ENCODE measurements at regions of chr5 and their contacts with region 1.

Region 1: GRCh38 chr5:95822542-95823181 is at the start of gene GLRX:
- DNase-seq: peak; percentile 66 to 95
- H3K4me3 ChIP-seq: peak within 1 kb of the TSS; percentile 79
- H3K27ac ChIP-seq: peak within 1 kb of the TSS; percentile 98
- H3K4me1 ChIP-seq: peaks cover 32% of the 10 kb centered on the region
- H3K27me3 ChIP-seq: no peaks in the 10 kb centered on the region
- CTCF ChIP-seq: no peak
- total RNA-seq, gene GLRX: 23.0 and 25.5 TPM in 2 replicates

Region 2: GRCh38 chr5:95760273-95761191 is 62.1 kb before region 1 on chr5:
- CTCF ChIA-PET with region 1: no interaction called
- POLR2A ChIA-PET with region 1: no interaction called
- intact Hi-C with region 1: loop called (anchors 2 kb)
- DNase-seq: peak; percentile 6 to 69
- H3K4me3 ChIP-seq: no peak overlapping the region
- H3K27ac ChIP-seq: peak overlapping the region; percentile 37
- H3K4me1 ChIP-seq: peaks cover 24% of the 10 kb centered on the region; the same call in 1 of the 2 replicates
- H3K27me3 ChIP-seq: no peaks in the 10 kb centered on the region
- CTCF ChIP-seq: no peak

Region 3: DNA sequence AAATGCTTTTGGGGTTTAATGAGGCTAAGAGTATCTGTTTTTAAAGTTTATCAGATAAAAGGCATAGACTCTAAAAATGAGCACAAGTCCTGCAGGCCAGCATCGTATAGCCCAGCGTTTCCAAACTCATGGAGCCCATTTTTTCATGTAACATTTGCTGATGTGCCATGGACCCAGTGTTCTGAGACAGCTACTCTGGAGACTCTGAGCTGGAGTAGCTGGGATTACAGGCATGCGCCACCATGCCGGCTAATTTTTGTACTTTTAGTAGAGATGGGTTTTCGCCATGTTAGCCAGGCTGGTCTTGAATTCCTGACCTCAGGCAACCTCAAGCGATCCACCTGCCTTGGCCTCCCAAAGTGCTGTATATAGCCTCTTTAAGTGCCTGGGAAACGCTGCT is 16.0 kb before region 1 on chr5:
- CTCF ChIA-PET with region 1: no interaction called
- POLR2A ChIA-PET with region 1: interaction called, 12 read pairs
- intact Hi-C with region 1: no loop called
- DNase-seq: no peak
- H3K4me3 ChIP-seq: no peak overlapping the region
- H3K27ac ChIP-seq: no peak overlapping the region
- H3K4me1 ChIP-seq: no peaks in the 10 kb centered on the region
- H3K27me3 ChIP-seq: no peaks in the 10 kb centered on the region
- CTCF ChIP-seq: no peak